Transverse colon (tissue), 4 donors: ENCODE measurements at regions of chr2 and their contacts with region 1.

Region 1: DNA sequence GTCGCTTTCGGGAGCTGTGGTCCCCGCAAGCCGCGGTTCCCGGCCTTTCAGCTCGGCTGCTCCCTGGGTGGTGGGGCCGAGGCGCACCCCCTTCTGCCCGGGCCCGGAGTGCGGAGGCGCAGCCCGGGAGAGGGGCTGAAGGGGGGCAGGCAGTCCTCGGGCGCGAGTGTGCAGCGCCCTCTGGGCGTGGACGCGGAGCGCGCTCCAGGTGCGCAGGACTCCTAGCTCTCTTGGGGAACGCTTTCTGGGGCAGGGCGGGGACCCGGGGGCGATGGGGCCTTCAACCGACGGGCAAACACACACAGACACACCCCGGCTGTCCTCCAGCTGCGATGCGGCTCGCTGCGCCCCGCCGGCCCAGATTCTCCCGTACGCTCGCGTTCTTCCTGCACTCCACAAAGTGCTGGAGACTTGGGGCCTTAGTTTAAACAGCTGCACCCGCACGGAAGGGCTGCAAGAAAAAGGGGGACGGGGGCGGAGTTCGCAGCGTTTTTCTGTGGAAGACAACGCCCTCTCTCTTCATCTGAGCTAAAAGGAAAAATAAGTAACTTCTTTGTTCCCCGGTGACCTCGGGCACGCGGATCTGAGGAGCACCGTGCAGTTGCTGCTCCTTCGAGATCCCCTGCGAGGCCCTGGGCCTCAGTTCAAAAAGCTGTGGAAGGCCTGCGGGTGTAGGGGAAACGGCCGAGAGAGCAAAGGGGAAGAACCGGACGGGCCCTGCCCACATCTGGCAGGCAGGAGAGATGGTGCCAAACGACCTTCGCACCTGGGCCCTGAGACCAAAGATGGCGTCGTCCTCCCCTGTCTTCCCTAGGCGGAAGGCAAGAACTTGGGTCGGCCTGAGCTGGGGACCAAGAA is 593 bp upstream of the SDC1 start:
- DNase-seq: peak; percentile 91
- H3K4me3 ChIP-seq: peak overlapping the region; percentile 76 to 84 (median 82)
- H3K27ac ChIP-seq: peak overlapping the region; percentile 92 to 95 (median 93)
- H3K4me1 ChIP-seq: peaks cover 9 to 36% (median 31%) of the 10 kb centered on the region in 4 donors
- H3K27me3 ChIP-seq: no peaks in the 10 kb centered on the region
- CTCF ChIP-seq: peak; percentile 36 to 77 (median 58)
- EP300 ChIP-seq: peak; percentile 3
- POLR2A ChIP-seq: peak; percentile 63

Region 2: DNA sequence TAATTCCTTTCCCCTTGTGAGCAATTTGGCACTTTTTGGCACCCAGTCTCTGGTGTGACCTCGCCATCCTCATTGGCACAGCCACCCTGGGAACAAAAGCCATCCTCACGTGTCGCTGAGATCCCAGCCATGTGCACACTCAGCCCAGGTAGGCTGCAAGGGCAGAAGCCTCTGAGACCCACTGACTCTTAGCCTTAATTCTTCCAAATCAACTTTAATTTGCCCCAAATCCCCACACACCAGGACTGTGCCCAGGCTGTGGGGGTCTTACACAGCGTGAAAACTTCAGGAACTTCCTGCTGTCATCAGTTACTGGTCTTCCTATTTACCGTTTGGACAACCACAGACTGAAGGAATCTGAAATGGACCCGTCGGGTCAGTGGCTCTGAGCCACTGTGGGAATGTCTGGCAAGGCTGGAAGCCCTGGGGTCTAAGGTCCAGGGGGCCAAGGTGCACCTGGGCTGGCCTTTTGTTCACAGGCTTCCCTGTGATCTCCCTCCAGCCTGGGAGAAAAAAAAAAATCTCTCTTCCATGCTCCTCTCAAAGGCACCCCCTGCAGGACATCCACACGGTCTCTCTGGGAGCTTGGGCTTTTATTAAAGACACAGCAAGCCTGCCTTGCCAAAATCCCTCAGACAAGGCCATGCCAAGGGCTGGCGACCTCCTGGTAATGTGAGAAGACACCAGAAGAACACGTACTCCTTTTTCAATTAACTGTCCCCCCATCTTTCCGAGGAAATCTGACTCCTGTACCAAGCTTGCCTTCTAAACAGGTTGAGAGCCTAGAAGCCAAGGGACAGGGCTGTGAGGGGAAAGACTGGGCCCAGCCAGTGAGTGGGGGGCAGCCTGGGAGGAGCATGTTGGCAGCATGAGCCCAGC is 132.0 kb before region 1 on chr2:
- in situ Hi-C with region 1: no loop called
- intact Hi-C with region 1: no loop called
- DNase-seq: peak; percentile 66
- H3K4me3 ChIP-seq: no peak overlapping the region
- H3K27ac ChIP-seq: no peak overlapping the region
- H3K4me1 ChIP-seq: peaks cover 0 to 17% (median 6%) of the 10 kb centered on the region in 4 donors
- H3K27me3 ChIP-seq: no peaks in the 10 kb centered on the region
- CTCF ChIP-seq: peak; percentile 43 to 65 (median 50)
- EP300 ChIP-seq: no peak
- POLR2A ChIP-seq: no peak

Region 3: GRCh38 chr2:20106746-20107145 is 118.8 kb before region 1 on chr2:
- in situ Hi-C with region 1: no loop called
- intact Hi-C with region 1: loop called (anchors 10 kb)
- DNase-seq: peak; percentile 56
- H3K4me3 ChIP-seq: peak overlapping the region in 1 of 4 donors; percentile 19
- H3K27ac ChIP-seq: peak overlapping the region in 1 of 4 donors; percentile 34
- H3K4me1 ChIP-seq: peaks cover 0 to 20% (median 4%) of the 10 kb centered on the region in 4 donors
- H3K27me3 ChIP-seq: no peaks in the 10 kb centered on the region
- CTCF ChIP-seq: peak in 4 of 5 experiments; percentile 35 to 68 (median 43)
- EP300 ChIP-seq: no peak
- POLR2A ChIP-seq: no peak

Region 4: GRCh38 chr2:20135631-20136050 is 89.9 kb before region 1 on chr2:
- in situ Hi-C with region 1: loop called in 1 of 4 experiments (anchors 10 kb)
- intact Hi-C with region 1: no loop called
- DNase-seq: peak; percentile 78
- H3K4me3 ChIP-seq: no peak overlapping the region
- H3K27ac ChIP-seq: peak overlapping the region in 1 of 4 donors; percentile 22
- H3K4me1 ChIP-seq: peaks cover 0 to 20% (median 3%) of the 10 kb centered on the region in 4 donors
- H3K27me3 ChIP-seq: no peaks in the 10 kb centered on the region
- CTCF ChIP-seq: peak; percentile 51 to 75 (median 63)
- EP300 ChIP-seq: no peak
- POLR2A ChIP-seq: no peak

Region 5: DNA sequence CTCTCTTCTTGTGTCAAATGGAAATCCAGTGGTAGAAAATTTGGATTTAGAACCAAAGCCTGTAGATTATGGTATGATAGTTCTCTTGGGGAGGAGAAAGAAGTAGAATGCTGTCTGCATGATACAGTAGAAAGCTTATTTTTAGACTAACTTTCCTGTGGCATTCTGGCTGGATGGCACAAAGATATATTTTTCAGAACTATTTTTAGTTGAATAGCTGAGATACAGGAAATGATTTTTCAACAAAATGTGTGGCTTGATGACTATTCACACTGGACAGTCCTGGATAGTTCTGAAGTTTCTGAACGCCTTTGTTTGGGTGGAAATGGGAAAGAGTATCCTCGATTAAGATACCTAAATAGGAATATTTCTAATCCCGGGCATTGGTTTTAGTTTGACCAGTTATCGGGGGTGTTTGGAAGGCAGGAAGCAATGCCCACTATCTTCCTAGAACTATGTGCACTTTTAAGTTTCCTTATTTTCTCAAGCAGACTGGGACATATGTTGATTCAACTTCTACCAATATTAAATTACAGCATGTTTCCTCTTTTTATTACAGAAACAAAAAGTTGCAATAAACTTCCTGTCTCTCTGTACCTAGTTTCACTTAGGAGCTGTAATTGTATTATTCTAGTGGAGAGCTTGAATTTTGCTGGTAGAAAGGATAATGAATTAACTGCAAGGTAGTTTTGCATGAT is 473.5 kb after region 1 on chr2:
- in situ Hi-C with region 1: no loop called
- intact Hi-C with region 1: no loop called
- DNase-seq: no peak
- H3K4me3 ChIP-seq: no peak overlapping the region
- H3K27ac ChIP-seq: peak overlapping the region in 1 of 4 donors; percentile 4
- H3K4me1 ChIP-seq: peaks cover 0 to 3% (median 0%) of the 10 kb centered on the region in 4 donors
- H3K27me3 ChIP-seq: no peaks in the 10 kb centered on the region
- CTCF ChIP-seq: no peak
- EP300 ChIP-seq: no peak
- POLR2A ChIP-seq: no peak